ENCODE measurements at regions of chr5 and their contacts with region 1.

Region 1: DNA sequence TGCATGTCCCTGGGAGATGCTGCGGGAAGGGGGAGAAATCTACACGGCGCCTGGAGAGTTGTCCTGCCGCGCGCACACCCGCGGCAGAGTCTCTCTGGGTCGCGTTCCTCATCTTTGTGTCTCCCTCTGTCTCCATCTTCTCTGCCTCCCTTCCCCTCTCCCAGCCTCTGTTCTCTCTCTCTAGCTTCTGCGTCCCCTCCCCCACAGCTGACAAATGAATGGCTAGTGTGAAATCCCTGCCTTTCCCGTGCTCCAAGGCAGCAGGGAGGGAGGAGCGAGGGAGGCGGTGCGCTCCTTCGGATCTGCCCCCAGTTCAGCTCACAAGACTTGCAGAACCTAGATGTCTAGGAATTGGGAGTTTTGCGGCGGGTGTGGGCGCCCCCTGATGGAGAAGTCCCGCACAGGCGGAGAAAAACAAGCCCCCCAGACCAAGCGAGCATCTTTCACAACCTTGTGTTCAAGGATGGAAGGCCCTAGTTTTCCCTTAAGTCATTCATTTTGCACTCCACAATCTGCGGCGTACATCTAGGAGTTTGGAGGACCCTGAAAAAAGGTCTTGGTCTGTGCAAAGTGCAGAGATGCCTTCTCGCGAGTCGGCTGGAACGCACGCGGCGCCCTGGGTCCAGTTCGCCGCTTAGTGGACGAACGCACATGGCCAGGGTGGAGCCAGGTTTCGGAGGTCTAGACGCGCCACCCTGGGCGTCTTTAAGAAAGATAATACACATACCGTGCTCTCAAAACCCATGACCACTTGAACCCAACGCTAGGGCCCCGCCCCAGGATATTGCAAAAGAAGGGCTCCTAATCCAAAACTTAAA is 2.0 kb downstream of the VCAN start:
- DNase-seq: peak; percentile 98
- ATAC-seq: peak; percentile 78
- H3K4me3 ChIP-seq: peak overlapping the region; percentile 56
- H3K27ac ChIP-seq: peak overlapping the region; percentile 82
- H3K4me1 ChIP-seq: peaks cover 3% of the 10 kb centered on the region
- H3K27me3 ChIP-seq: peaks cover under 1% of the 10 kb centered on the region
- CTCF ChIP-seq: peak; percentile 92
- POLR2A ChIP-seq: no peak
- RAD21 ChIP-seq: peak; percentile 85

Region 2: GRCh38 chr5:82413302-82414040 is 1060.1 kb before region 1 on chr5:
- CTCF ChIA-PET with region 1: no interaction called
- POLR2A ChIA-PET with region 1: no interaction called
- dilution Hi-C with region 1: no loop called
- in situ Hi-C with region 1: no loop called
- intact Hi-C with region 1: loop called (anchors 5 kb)
- DNase-seq: peak; percentile 83
- ATAC-seq: peak; percentile 86
- H3K4me3 ChIP-seq: no peak overlapping the region
- H3K27ac ChIP-seq: peak overlapping the region; percentile 100
- H3K4me1 ChIP-seq: peaks cover 13% of the 10 kb centered on the region
- H3K27me3 ChIP-seq: no peaks in the 10 kb centered on the region
- CTCF ChIP-seq: no peak
- POLR2A ChIP-seq: no peak
- RAD21 ChIP-seq: no peak

Region 3: GRCh38 chr5:82799361-82800080 is 674.0 kb before region 1 on chr5:
- CTCF ChIA-PET with region 1: no interaction called
- POLR2A ChIA-PET with region 1: no interaction called
- dilution Hi-C with region 1: no loop called
- in situ Hi-C with region 1: no loop called
- intact Hi-C with region 1: loop called (anchors 5 kb)
- DNase-seq: no peak
- ATAC-seq: no peak
- H3K4me3 ChIP-seq: no peak overlapping the region
- H3K27ac ChIP-seq: no peak overlapping the region
- H3K4me1 ChIP-seq: no peaks in the 10 kb centered on the region
- H3K27me3 ChIP-seq: no peaks in the 10 kb centered on the region; the same call in 1 of the 2 replicates
- CTCF ChIP-seq: no peak
- POLR2A ChIP-seq: no peak
- RAD21 ChIP-seq: no peak

Region 4: GRCh38 chr5:83076742-83077661 is 396.6 kb before region 1 on chr5 and contains the starts of genes TMEM167A and XRCC4:
- CTCF ChIA-PET with region 1: interaction called, 3 read pairs
- POLR2A ChIA-PET with region 1: no interaction called
- dilution Hi-C with region 1: no loop called
- in situ Hi-C with region 1: no loop called
- intact Hi-C with region 1: loop called (anchors 1 kb)
- DNase-seq: peak; percentile 99
- ATAC-seq: peak; percentile 100
- H3K4me3 ChIP-seq: peak within 1 kb of the TSS; percentile 79
- H3K27ac ChIP-seq: peak within 1 kb of the TSS; percentile 88
- H3K4me1 ChIP-seq: peaks cover 3% of the 10 kb centered on the region; the same call in 1 of the 2 replicates
- H3K27me3 ChIP-seq: no peaks in the 10 kb centered on the region
- CTCF ChIP-seq: no peak
- POLR2A ChIP-seq: peak; percentile 95
- RAD21 ChIP-seq: no peak
- total RNA-seq, gene TMEM167A: 34.6 and 95.8 TPM in 2 replicates
- total RNA-seq, gene XRCC4: 4.7 and 11.7 TPM in 2 replicates

Region 5: GRCh38 chr5:83430130-83431010 is 43.2 kb before region 1 on chr5:
- CTCF ChIA-PET with region 1: interaction called, 5 read pairs
- POLR2A ChIA-PET with region 1: no interaction called
- dilution Hi-C with region 1: no loop called
- in situ Hi-C with region 1: no loop called
- intact Hi-C with region 1: loop called (anchors 5 kb)
- DNase-seq: peak; percentile 69
- ATAC-seq: peak; percentile 89
- H3K4me3 ChIP-seq: no peak overlapping the region
- H3K27ac ChIP-seq: no peak overlapping the region
- H3K4me1 ChIP-seq: no peaks in the 10 kb centered on the region
- H3K27me3 ChIP-seq: no peaks in the 10 kb centered on the region
- CTCF ChIP-seq: peak; percentile 93
- POLR2A ChIP-seq: no peak
- RAD21 ChIP-seq: peak; percentile 89

Region 6: DNA sequence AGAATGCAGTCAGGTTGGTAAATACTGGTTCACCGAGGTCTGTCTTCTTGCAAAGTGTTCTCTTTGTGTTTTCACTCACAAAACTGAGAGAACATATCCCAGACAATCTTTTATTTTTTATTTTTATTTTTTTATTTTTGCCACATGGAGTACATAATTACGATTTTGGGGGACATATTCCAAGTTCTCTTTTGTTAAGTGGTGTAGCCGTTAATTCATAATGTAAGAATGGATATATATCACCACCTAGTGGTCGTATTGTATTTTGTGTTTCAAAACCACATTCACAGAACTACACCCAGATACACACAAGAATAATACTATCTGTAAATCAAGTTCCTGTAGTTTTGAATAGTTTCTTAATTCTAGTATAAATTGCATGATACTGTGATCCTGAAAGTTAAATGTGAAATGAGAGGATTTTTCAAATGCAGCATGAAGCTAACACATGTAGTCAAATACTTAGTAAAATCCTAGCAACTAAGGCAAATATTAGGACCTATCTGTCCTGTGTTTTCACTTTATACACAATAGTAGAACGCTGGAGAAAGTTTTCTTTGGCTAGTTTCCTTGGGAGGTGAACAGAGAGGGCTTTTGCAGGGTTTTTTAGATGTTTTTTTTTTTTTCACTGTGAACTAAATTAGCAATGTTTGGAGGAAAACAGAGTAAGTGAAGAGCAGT is 90.7 kb after region 1 on chr5:
- CTCF ChIA-PET with region 1: interaction called, 5 read pairs
- POLR2A ChIA-PET with region 1: no interaction called
- dilution Hi-C with region 1: no loop called
- in situ Hi-C with region 1: no loop called
- intact Hi-C with region 1: loop called (anchors 1 kb)
- DNase-seq: peak; percentile 63
- ATAC-seq: peak; percentile 56; the same call in 1 of the 2 replicates
- H3K4me3 ChIP-seq: no peak overlapping the region
- H3K27ac ChIP-seq: no peak overlapping the region
- H3K4me1 ChIP-seq: peaks cover 9% of the 10 kb centered on the region
- H3K27me3 ChIP-seq: no peaks in the 10 kb centered on the region
- CTCF ChIP-seq: peak; percentile 70
- POLR2A ChIP-seq: no peak
- RAD21 ChIP-seq: peak; percentile 75

Measured in IMR-90 (cell line).